CD8-positive, alpha-beta memory T cell (primary cell): ENCODE measurements at regions of chr20 and their contacts with region 1.

Region 1: GRCh38 chr20:63707549-63708300 is at the starts of genes ARFRP1 and ZGPAT:
- DNase-seq: peak; percentile 78 to 87 (median 85)
- H3K4me3 ChIP-seq: peak within 1 kb of the TSS; percentile 91
- H3K4me3 Mint-ChIP-seq: peak within 1 kb of the TSS; percentile 87 to 95 (median 89)
- H3K27ac ChIP-seq: peak within 1 kb of the TSS; percentile 70
- H3K27ac Mint-ChIP-seq: peak within 1 kb of the TSS; percentile 78 to 96 (median 91)
- H3K4me1 ChIP-seq: peaks cover 37% of the 10 kb centered on the region
- H3K4me1 Mint-ChIP-seq: peaks cover 37 to 59% (median 46%) of the 10 kb centered on the region in 3 donors
- H3K27me3 ChIP-seq: no peaks in the 10 kb centered on the region
- H3K27me3 Mint-ChIP-seq: no peaks in the 10 kb centered on the region
- total RNA-seq, gene ARFRP1: 63.7 to 72.8 TPM
- total RNA-seq, gene ZGPAT: 29.7 to 29.9 TPM

Region 2: GRCh38 chr20:63718996-63719395 is 11.3 kb after region 1 on chr20:
- CTCF ChIA-PET with region 1: interaction called, 12 read pairs
- POLR2A ChIA-PET with region 1: interaction called, 4 read pairs
- DNase-seq: no peak
- H3K4me3 ChIP-seq: no peak overlapping the region
- H3K4me3 Mint-ChIP-seq: no peak overlapping the region
- H3K27ac ChIP-seq: no peak overlapping the region
- H3K27ac Mint-ChIP-seq: peak overlapping the region in 1 of 8 donors; percentile 7
- H3K4me1 ChIP-seq: peaks cover 6% of the 10 kb centered on the region
- H3K4me1 Mint-ChIP-seq: peaks cover 31 to 57% (median 43%) of the 10 kb centered on the region in 3 donors
- H3K27me3 ChIP-seq: no peaks in the 10 kb centered on the region
- H3K27me3 Mint-ChIP-seq: no peaks in the 10 kb centered on the region

Region 3: DNA sequence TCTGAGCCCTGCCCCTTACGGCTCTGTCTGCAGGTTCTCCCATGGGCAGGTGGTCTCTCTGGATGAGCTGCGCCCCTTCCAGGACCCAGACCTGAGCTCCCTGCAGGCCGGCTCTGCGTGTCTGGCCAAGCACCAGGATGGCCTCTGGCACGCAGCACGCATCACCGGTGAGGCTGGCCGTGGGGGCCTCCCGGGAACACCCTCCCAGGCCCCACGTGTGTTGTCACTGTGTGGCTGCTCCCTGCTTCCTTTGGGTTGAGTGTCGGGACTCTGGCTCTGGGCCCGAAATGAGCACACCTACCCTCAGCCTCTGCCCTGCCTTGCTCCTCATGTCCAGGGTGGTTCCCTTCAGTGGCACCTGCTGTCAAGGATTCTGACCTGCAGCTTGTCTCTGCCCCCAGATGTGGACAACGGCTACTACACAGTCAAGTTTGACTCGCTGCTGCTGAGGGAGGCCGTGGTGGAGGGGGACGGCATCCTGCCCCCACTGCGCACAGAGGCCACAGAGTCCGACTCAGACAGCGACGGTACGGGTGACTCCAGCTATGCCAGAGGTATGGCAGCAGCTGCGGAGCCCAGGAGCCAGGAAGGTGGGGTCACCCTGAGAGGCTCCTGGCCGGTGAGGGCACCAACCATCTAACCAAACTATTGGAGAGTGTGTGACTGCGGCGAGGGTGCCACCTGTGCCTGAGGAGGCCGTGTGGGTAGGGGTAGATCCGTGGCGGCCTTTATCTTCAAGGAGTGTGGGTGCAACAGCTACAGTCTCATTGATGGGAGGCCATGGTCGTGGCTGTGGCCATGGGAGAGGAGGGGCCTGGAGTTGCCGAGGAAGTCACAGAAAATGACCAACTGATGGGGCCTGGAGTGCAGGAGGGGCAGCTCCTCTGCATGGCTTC is 25.7 kb after region 1 on chr20:
- CTCF ChIA-PET with region 1: interaction called, 39 read pairs
- POLR2A ChIA-PET with region 1: interaction called, 84 read pairs
- DNase-seq: no peak
- H3K4me3 ChIP-seq: no peak overlapping the region
- H3K4me3 Mint-ChIP-seq: peak overlapping the region in 2 of 7 donors; percentile 35 to 64
- H3K27ac ChIP-seq: no peak overlapping the region
- H3K27ac Mint-ChIP-seq: peak overlapping the region in 3 of 8 donors; percentile 18 to 90 (median 61)
- H3K4me1 ChIP-seq: peaks cover 60% of the 10 kb centered on the region
- H3K4me1 Mint-ChIP-seq: peaks cover 11 to 37% (median 20%) of the 10 kb centered on the region in 3 donors
- H3K27me3 ChIP-seq: no peaks in the 10 kb centered on the region
- H3K27me3 Mint-ChIP-seq: peaks cover 0 to 3% of the 10 kb centered on the region in 2 donors

Region 4: DNA sequence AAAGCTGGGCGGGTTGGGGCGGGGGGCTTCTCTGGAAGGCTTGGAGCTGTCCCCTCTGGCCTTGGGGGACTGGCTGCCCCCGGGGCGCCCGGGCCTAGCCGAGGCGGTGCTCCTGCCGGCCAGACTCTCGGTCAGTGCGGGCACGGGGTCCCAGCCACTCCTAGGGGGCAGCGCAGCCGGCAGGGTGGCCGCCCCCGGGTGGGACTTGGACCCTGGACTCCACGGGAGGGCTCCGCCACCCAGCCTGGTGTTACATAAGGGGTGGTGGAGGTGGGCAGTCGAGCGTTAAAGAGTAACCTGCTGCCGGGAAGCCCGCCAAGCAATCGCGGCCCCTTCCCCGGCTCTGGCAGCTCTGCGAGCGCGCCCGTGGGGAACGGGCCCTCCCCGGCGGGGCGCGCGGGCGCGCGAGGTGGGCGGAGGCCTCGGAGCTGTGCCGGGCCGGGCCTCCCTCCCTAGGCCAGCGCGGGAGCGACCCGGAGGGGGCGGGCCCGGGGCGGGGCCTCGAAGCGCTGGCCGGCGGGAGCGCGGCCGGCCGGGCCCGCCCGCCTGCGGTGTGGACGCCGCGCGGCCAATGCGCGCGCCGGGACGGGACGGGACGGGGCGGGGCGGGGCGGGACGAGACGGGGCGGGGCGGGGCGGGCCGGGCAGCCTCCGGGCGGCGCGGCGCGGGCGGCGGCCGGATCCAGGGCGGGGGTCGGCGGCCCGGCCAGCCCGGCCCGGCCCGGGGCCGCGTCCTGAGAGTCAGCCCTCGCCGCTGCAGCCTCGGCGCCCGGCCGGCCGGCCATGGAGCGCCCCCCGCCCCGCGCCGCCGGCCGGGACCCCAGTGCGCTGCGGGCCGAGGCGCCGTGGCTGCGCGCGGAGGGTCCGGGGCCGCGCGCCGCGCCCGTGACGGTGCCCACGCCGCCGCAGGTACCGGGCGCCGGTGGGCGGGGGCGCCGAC is 31.7 kb after region 1 on chr20 and contains the start of gene SLC2A4RG:
- CTCF ChIA-PET with region 1: interaction called, 39 read pairs
- POLR2A ChIA-PET with region 1: interaction called, 84 read pairs
- DNase-seq: peak; percentile 59 to 79 (median 68)
- H3K4me3 ChIP-seq: peak within 1 kb of the TSS; percentile 66
- H3K4me3 Mint-ChIP-seq: peak within 1 kb of the TSS; percentile 59 to 92 (median 76)
- H3K27ac ChIP-seq: peak within 1 kb of the TSS; percentile 38
- H3K27ac Mint-ChIP-seq: peak within 1 kb of the TSS in 3 of 8 donors; percentile 36 to 61 (median 55)
- H3K4me1 ChIP-seq: peaks cover 30% of the 10 kb centered on the region
- H3K4me1 Mint-ChIP-seq: peaks cover 10 to 29% (median 11%) of the 10 kb centered on the region in 3 donors
- H3K27me3 ChIP-seq: no peaks in the 10 kb centered on the region
- H3K27me3 Mint-ChIP-seq: peaks cover 0 to 3% of the 10 kb centered on the region in 2 donors
- total RNA-seq, gene SLC2A4RG: 37.5 to 40.6 TPM

Region 5: GRCh38 chr20:63775096-63775978 is 67.6 kb after region 1 on chr20:
- CTCF ChIA-PET with region 1: interaction called, 10 read pairs
- POLR2A ChIA-PET with region 1: no interaction called
- DNase-seq: peak in 4 of 5 donors; percentile 21 to 58 (median 28)
- H3K4me3 ChIP-seq: no peak overlapping the region
- H3K4me3 Mint-ChIP-seq: peak overlapping the region in 4 of 7 donors; percentile 23 to 75 (median 34)
- H3K27ac ChIP-seq: no peak overlapping the region
- H3K27ac Mint-ChIP-seq: no peak overlapping the region
- H3K4me1 ChIP-seq: no peaks in the 10 kb centered on the region
- H3K4me1 Mint-ChIP-seq: peaks cover 0 to 6% (median 5%) of the 10 kb centered on the region in 3 donors
- H3K27me3 ChIP-seq: no peaks in the 10 kb centered on the region
- H3K27me3 Mint-ChIP-seq: no peaks in the 10 kb centered on the region

Region 6: GRCh38 chr20:63782051-63782471 is 74.3 kb after region 1 on chr20:
- CTCF ChIA-PET with region 1: interaction called, 14 read pairs
- POLR2A ChIA-PET with region 1: no interaction called
- DNase-seq: peak; percentile 53 to 88 (median 70)
- H3K4me3 ChIP-seq: no peak overlapping the region
- H3K4me3 Mint-ChIP-seq: peak overlapping the region; percentile 22 to 90 (median 53)
- H3K27ac ChIP-seq: no peak overlapping the region
- H3K27ac Mint-ChIP-seq: peak overlapping the region in 7 of 8 donors; percentile 44 to 89 (median 84)
- H3K4me1 ChIP-seq: peaks cover 17% of the 10 kb centered on the region
- H3K4me1 Mint-ChIP-seq: peaks cover 14 to 20% (median 18%) of the 10 kb centered on the region in 3 donors
- H3K27me3 ChIP-seq: no peaks in the 10 kb centered on the region
- H3K27me3 Mint-ChIP-seq: no peaks in the 10 kb centered on the region

Region 7: GRCh38 chr20:63864847-63865640 is 157.3 kb after region 1 on chr20 and contains the start of gene TPD52L2:
- CTCF ChIA-PET with region 1: interaction called, 28 read pairs
- POLR2A ChIA-PET with region 1: interaction called, 10 read pairs
- DNase-seq: peak; percentile 96 to 98 (median 96)
- H3K4me3 ChIP-seq: peak within 1 kb of the TSS; percentile 79
- H3K4me3 Mint-ChIP-seq: peak within 1 kb of the TSS; percentile 92 to 99 (median 95)
- H3K27ac ChIP-seq: peak within 1 kb of the TSS; percentile 80
- H3K27ac Mint-ChIP-seq: peak within 1 kb of the TSS; percentile 90 to 99 (median 96)
- H3K4me1 ChIP-seq: peaks cover 21% of the 10 kb centered on the region
- H3K4me1 Mint-ChIP-seq: peaks cover 19 to 38% (median 32%) of the 10 kb centered on the region in 3 donors
- H3K27me3 ChIP-seq: no peaks in the 10 kb centered on the region
- H3K27me3 Mint-ChIP-seq: no peaks in the 10 kb centered on the region
- total RNA-seq, gene TPD52L2: 60.0 to 64.4 TPM